ENCODE measurements at regions of chr5 and their contacts with region 1.

Region 1: GRCh38 chr5:102782311-102782770 is 27.2 kb downstream of the PAM start:
- DNase-seq: no peak
- CTCF ChIP-seq: no peak

Region 2: DNA sequence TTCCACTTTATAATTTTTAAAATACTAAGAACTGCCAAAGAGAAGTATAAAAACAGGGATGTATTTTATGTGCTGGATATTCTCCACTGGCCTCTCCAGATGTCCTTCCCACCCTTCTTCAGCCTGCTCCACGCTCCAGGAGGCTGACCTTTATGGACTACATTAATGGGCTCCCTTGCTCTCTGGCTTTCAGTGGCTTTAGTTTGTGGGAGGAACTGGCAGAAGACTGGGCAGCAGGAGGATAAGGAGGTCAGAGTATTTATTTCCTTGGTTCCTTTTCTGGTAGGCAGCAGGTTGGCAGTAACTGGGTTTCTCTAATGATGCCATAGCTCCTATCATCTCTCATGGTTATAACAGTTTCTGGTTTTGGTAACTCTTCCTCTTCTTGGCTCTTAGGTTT is 106.7 kb after region 1 on chr5:
- in situ Hi-C with region 1: no loop called
- DNase-seq: no peak
- CTCF ChIP-seq: no peak

Region 3: DNA sequence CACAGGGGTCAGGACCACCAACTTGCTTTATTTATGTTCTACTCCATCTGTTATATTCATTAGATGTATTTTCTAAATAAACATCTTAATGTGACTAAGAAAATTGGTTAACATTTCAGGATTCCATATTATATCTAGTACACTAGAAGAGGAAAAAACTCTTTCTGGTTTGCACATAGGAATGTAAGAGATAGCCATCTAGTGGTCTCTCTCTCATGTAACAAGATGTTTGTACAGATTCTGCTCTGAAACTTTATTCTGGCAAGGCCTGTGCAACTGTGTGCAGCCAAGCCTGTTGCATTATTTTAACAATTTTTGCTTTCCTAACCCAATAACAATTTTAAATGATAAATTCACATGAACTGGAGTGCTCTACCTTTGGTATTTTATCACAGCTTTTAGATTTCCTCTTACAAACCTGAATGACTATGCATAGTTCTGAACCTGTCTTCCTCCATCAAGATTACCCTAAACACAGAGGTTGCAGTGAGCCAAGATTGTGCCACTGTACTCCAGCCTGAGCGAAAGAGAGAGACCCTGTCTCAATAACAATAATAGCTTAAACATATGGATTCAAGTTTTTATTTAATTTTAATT is 189.5 kb after region 1 on chr5:
- in situ Hi-C with region 1: loop called (anchors 10 kb)
- DNase-seq: no peak
- CTCF ChIP-seq: peak; percentile 43

Measured in GM13976 (cell line).